Activated T-helper 2 cell treated with anti-CD3 and anti-CD28 coated beads, Interferon-gamma antibody, Interleukin-2, Interleukin-4, amounts not matched to agents 10 μg/mL and 5 μg/mL and 100 μg/mL, durations not matched to agents 14 hours and 24 hours and 36 hours (primary cell): ENCODE measurements at regions of chrX and their contacts with region 1.

Region 1: GRCh38 chrX:24498975-24499374 is 33.9 kb downstream of the PDK3 start:
- DNase-seq: no peak
- H3K4me3 Mint-ChIP-seq: no peak overlapping the region
- H3K27ac Mint-ChIP-seq: no peak overlapping the region
- H3K4me1 Mint-ChIP-seq: peaks cover 15% of the 10 kb centered on the region
- H3K27me3 Mint-ChIP-seq: no peaks in the 10 kb centered on the region

Region 2: GRCh38 chrX:24435060-24435459 is 63.9 kb before region 1 on chrX:
- intact Hi-C with region 1: no loop called
- DNase-seq: no peak
- H3K4me3 Mint-ChIP-seq: no peak overlapping the region
- H3K27ac Mint-ChIP-seq: no peak overlapping the region
- H3K4me1 Mint-ChIP-seq: no peaks in the 10 kb centered on the region
- H3K27me3 Mint-ChIP-seq: peaks cover 1% of the 10 kb centered on the region

Region 3: GRCh38 chrX:24464836-24465531 is 34.0 kb before region 1 on chrX and contains the start of gene PDK3:
- intact Hi-C with region 1: loop called (anchors 2 kb)
- DNase-seq: peak; percentile 81
- H3K4me3 Mint-ChIP-seq: peak within 1 kb of the TSS; percentile 84
- H3K27ac Mint-ChIP-seq: peak within 1 kb of the TSS; percentile 85
- H3K4me1 Mint-ChIP-seq: peaks cover 27% of the 10 kb centered on the region
- H3K27me3 Mint-ChIP-seq: no peaks in the 10 kb centered on the region
- total RNA-seq, gene PDK3: 24.6 and 26.4 TPM in 2 replicates